ENCODE measurements at regions of chr1 and their contacts with region 1.

Region 1: GRCh38 chr1:233530665-233531386 is 83.1 kb upstream of the KCNK1 start:
- DNase-seq: no peak
- H3K4me3 ChIP-seq: no peak overlapping the region
- H3K27ac ChIP-seq: no peak overlapping the region
- H3K4me1 ChIP-seq: peaks cover 0 to 3% (median 0%) of the 10 kb centered on the region in 4 experiments; a peak in 1 of 7 replicates
- H3K27me3 ChIP-seq: no peaks in the 10 kb centered on the region
- CTCF ChIP-seq: no peak
- EP300 ChIP-seq: no peak
- POLR2A ChIP-seq: no peak
- RAD21 ChIP-seq: no peak

Region 2: DNA sequence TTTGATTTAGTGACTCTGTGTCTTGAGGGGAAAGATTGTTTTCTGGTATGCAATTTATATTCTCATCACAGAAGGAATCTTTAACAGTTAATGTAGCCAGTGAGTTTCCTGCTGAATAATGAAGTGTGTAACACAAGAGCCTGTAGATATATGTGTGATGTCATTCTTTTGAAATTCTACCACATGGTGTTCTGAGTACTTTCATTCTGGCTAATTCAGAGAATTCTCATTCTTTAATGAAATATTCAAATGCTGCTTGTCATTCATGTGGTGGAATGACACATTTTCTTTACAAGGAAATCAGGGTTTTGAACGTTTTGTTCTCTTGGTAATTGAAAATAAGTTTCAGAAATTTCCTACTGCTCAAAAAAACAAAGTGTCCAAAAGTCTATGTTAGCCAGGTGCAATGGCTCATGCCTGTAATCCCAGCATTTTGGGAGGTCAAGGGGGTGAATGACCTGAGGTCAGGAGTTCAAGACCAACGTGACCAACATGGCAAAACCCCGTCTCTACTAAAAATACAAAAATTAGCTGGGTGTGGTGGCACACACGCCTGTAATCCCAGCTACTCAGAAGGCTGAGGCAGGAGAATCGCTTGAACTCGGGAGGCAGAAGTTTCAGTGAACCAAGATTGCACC is 123.7 kb before region 1 on chr1:
- CTCF ChIA-PET with region 1: no interaction called
- POLR2A ChIA-PET with region 1: no interaction called
- DNase-seq: no peak
- H3K4me3 ChIP-seq: no peak overlapping the region
- H3K27ac ChIP-seq: no peak overlapping the region
- H3K4me1 ChIP-seq: no peaks in the 10 kb centered on the region; a peak in 1 of 7 replicates
- H3K27me3 ChIP-seq: no peaks in the 10 kb centered on the region
- CTCF ChIP-seq: no peak
- EP300 ChIP-seq: no peak
- POLR2A ChIP-seq: no peak
- RAD21 ChIP-seq: no peak

Region 3: DNA sequence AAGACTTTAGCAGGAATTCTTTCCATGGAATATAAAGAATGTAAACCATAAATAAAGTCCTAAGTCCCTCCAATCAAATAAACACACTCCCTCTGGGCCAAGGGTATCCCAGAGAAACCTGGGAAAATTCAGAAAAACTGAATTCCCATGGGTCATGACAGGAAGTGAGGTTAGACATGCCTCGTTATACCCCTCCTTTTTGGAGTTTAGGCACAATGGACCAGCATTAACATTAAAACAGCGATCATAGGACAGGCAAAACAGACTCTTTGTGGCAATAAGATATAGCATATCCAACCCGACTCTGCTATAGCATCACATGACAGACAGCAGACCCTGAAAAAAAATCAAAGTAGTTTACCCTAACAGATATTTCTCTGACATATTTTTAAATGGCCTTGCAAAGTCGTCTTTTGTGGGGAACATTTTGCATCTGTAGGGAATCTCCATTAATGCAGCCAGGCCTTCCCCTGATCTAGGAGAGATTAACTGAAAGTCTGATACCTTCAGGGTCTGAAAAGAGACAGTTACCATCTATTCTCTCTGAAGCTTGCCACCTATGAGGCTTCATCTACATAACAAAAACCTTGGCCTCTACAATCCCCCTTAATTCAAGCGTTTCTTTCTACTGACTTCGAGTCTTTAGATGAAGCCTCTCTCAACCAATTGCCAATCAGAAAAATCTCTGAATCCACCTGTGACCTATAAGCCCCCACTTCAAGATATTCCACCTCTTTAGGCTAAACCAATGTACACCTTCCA is 59.9 kb before region 1 on chr1:
- CTCF ChIA-PET with region 1: no interaction called
- POLR2A ChIA-PET with region 1: no interaction called
- DNase-seq: no peak
- H3K4me3 ChIP-seq: peak overlapping the region in 1 of 4 experiments; percentile 7; a peak in 1 of 8 replicates
- H3K27ac ChIP-seq: peak overlapping the region; percentile 33; the same call in 1 of the 2 replicates
- H3K4me1 ChIP-seq: peaks cover 0 to 11% (median under 1%) of the 10 kb centered on the region in 4 experiments; a peak in 2 of 7 replicates
- H3K27me3 ChIP-seq: no peaks in the 10 kb centered on the region
- CTCF ChIP-seq: no peak
- EP300 ChIP-seq: no peak
- POLR2A ChIP-seq: no peak
- RAD21 ChIP-seq: no peak

Region 4: DNA sequence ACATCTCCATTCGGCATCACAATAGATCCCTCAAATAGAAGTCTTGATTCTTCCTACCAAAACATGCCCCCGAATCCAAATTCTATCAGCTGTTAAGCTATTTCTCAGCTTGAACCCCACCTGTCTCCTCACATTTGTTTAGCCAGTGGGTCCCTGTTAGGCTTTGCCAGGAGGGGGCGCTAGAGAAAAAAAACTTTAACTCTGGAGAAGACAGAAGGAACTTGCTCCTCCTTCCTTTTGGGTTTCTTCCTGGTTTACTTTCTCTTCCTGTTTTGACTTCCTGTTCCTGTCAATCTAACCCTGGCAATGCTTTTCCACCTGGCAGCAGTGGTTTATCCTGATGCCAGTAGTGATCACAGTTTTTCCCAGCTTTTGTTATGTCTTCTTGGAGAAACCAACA is 12.5 kb before region 1 on chr1:
- CTCF ChIA-PET with region 1: interaction called, 31 read pairs
- POLR2A ChIA-PET with region 1: interaction called, 3 read pairs
- DNase-seq: peak; percentile 38 to 89
- H3K4me3 ChIP-seq: no peak overlapping the region
- H3K27ac ChIP-seq: no peak overlapping the region
- H3K4me1 ChIP-seq: peaks cover 0 to 8% (median 2%) of the 10 kb centered on the region in 4 experiments; a peak in 4 of 7 replicates
- H3K27me3 ChIP-seq: peaks cover 0 to 2% (median 0%) of the 10 kb centered on the region in 4 experiments; a peak in 1 of 7 replicates
- CTCF ChIP-seq: peak in 2 of 3 experiments; percentile 73 to 74; a peak in 3 of 4 replicates
- EP300 ChIP-seq: no peak
- POLR2A ChIP-seq: no peak
- RAD21 ChIP-seq: peak; percentile 59 to 74

Region 5: GRCh38 chr1:233543340-233544255 is 12.8 kb after region 1 on chr1:
- CTCF ChIA-PET with region 1: no interaction called
- POLR2A ChIA-PET with region 1: no interaction called
- DNase-seq: no peak
- H3K4me3 ChIP-seq: no peak overlapping the region
- H3K27ac ChIP-seq: no peak overlapping the region
- H3K4me1 ChIP-seq: no peaks in the 10 kb centered on the region
- H3K27me3 ChIP-seq: no peaks in the 10 kb centered on the region
- CTCF ChIP-seq: no peak
- EP300 ChIP-seq: no peak
- POLR2A ChIP-seq: no peak
- RAD21 ChIP-seq: no peak